ENCODE measurements at regions of chr14 and their contacts with region 1.

Region 1: GRCh38 chr14:100662879-100663760 is 63.6 kb upstream of the DLK1 start:
- DNase-seq: peak; percentile 77
- ATAC-seq: peak; percentile 23; the same call in 1 of the 3 replicates
- H3K4me3 ChIP-seq: peak overlapping the region in 2 of 3 experiments; percentile 1 to 19; a peak in 2 of 6 replicates
- H3K27ac ChIP-seq: no peak overlapping the region
- H3K4me1 ChIP-seq: peaks cover 89% of the 10 kb centered on the region
- H3K27me3 ChIP-seq: no peaks in the 10 kb centered on the region
- CTCF ChIP-seq: peak; percentile 80
- EP300 ChIP-seq: no peak
- POLR2A ChIP-seq: no peak
- RAD21 ChIP-seq: peak; percentile 56

Region 2: DNA sequence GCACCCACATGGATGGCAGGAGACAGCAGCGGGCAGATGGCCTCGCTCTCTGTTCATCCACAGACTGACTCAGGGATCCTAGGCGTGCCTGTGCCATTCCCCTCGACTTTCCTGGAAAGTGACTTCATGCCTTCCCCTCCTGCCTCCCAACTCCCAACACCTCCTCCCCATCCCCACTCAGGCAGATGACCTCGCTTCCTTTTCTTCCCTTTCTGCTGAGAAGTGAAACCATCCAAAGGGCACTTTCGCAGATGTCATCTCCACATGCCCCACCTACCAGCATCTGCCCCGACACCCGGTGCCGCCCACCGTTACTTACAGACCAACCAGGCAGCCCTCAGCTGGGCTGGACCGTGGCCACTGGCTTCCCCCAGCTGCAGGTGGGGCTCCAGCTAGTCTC is 105.5 kb before region 1 on chr14:
- CTCF ChIA-PET with region 1: no interaction called
- POLR2A ChIA-PET with region 1: no interaction called
- in situ Hi-C with region 1: no loop called
- intact Hi-C with region 1: no loop called
- DNase-seq: no peak
- ATAC-seq: no peak
- H3K4me3 ChIP-seq: no peak overlapping the region
- H3K27ac ChIP-seq: no peak overlapping the region
- H3K4me1 ChIP-seq: no peaks in the 10 kb centered on the region
- H3K27me3 ChIP-seq: peaks cover 25 to 95% of the 10 kb centered on the region in 2 experiments
- CTCF ChIP-seq: no peak
- EP300 ChIP-seq: no peak
- POLR2A ChIP-seq: no peak
- RAD21 ChIP-seq: no peak

Region 3: DNA sequence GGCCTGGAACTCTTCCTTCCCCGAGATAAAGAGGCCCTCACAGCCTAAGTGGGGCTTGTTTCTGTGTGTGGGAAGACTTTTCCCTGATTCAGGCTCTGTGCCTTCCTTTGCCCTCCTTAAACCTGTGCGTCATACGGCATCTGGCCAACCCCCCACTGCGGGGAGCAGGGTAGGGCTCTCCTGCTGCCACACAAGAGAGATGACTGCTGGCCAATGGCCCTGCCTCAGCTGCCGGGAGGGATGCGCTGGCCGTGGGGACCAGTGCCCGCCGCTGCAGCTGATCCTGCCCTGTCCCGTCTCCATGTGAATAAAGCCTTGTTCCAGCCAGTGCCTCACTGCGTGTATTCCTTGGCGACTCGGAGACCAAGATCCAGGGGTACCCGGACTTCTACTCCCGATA is 33.4 kb before region 1 on chr14:
- CTCF ChIA-PET with region 1: no interaction called
- POLR2A ChIA-PET with region 1: no interaction called
- in situ Hi-C with region 1: no loop called
- intact Hi-C with region 1: no loop called
- DNase-seq: no peak
- ATAC-seq: no peak
- H3K4me3 ChIP-seq: no peak overlapping the region
- H3K27ac ChIP-seq: no peak overlapping the region
- H3K4me1 ChIP-seq: no peaks in the 10 kb centered on the region
- H3K27me3 ChIP-seq: peaks cover 8 to 56% of the 10 kb centered on the region in 2 experiments; a peak in 4 of 5 replicates
- CTCF ChIP-seq: no peak
- EP300 ChIP-seq: no peak
- POLR2A ChIP-seq: no peak
- RAD21 ChIP-seq: no peak

Region 4: DNA sequence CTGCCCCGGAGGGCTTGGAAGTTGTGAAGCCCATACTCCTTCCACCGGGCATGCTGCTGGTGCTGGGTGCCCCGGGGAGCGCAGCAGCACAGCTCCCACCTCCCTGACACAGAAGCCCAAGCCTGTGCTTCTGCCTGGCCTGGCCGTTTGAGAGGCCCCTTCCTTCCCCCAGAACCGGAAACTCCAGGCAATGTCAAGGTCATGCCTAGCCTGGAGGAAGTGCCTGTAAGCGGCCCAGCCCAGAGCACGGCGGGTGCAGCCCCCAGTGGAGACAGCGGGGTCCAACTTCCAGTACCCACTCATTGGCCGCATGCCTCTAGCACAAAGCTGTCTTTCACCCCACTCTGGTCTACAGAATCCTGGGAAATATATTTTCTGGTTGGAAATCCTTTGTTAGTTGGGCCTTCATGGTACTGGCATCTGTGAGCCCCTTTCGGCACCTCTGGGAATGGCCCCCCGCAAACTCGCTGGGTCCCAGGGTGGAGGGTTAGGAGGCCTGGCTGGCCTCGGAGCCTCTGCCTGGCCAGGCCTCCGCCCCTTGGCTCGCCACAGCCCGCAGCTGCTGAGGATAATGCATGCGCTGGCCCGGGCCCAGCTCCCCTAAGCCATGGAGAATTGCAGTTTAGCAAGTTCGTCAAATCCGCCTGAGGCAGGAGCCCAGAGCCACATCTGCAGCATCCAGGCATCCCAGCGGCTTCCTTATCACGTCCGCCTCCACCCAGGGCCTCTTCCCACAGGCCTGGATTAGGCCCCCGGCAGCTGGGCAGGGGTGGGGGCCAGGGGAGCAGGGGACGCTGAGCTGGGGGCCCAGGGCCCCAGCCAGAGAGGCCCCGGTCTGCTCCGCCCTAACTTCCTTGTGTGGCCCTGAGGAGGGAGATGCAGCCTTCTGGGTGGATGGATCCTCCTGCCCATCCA is 14.7 kb after region 1 on chr14:
- CTCF ChIA-PET with region 1: interaction called, 3 read pairs
- POLR2A ChIA-PET with region 1: interaction called, 19 read pairs
- in situ Hi-C with region 1: no loop called
- intact Hi-C with region 1: loop called (anchors 1 kb)
- DNase-seq: peak; percentile 80
- ATAC-seq: peak; percentile 31
- H3K4me3 ChIP-seq: no peak overlapping the region; a peak in 1 of 6 replicates
- H3K27ac ChIP-seq: peak overlapping the region; percentile 69
- H3K4me1 ChIP-seq: peaks cover 87% of the 10 kb centered on the region
- H3K27me3 ChIP-seq: no peaks in the 10 kb centered on the region
- CTCF ChIP-seq: peak; percentile 41; the same call in 1 of the 2 replicates
- EP300 ChIP-seq: peak; percentile 53 to 78; a peak in 3 of 4 replicates
- POLR2A ChIP-seq: no peak
- RAD21 ChIP-seq: no peak

Region 5: GRCh38 chr14:100755649-100756048 is 92.5 kb after region 1 on chr14:
- CTCF ChIA-PET with region 1: no interaction called
- POLR2A ChIA-PET with region 1: interaction called, 12 read pairs
- in situ Hi-C with region 1: no loop called
- intact Hi-C with region 1: no loop called
- DNase-seq: no peak
- ATAC-seq: no peak
- H3K4me3 ChIP-seq: no peak overlapping the region
- H3K27ac ChIP-seq: no peak overlapping the region
- H3K4me1 ChIP-seq: peaks cover 59% of the 10 kb centered on the region
- H3K27me3 ChIP-seq: no peaks in the 10 kb centered on the region
- CTCF ChIP-seq: no peak
- EP300 ChIP-seq: no peak
- POLR2A ChIP-seq: no peak
- RAD21 ChIP-seq: no peak

Region 6: GRCh38 chr14:100850841-100851585 is 187.9 kb after region 1 on chr14:
- CTCF ChIA-PET with region 1: interaction called, 7 read pairs
- POLR2A ChIA-PET with region 1: no interaction called
- in situ Hi-C with region 1: no loop called
- intact Hi-C with region 1: loop called (anchors 5 kb)
- DNase-seq: peak; percentile 48
- ATAC-seq: peak; percentile 87
- H3K4me3 ChIP-seq: no peak overlapping the region
- H3K27ac ChIP-seq: no peak overlapping the region
- H3K4me1 ChIP-seq: peaks cover 49% of the 10 kb centered on the region
- H3K27me3 ChIP-seq: no peaks in the 10 kb centered on the region; a peak in 1 of 5 replicates
- CTCF ChIP-seq: peak; percentile 91
- EP300 ChIP-seq: no peak
- POLR2A ChIP-seq: no peak
- RAD21 ChIP-seq: peak; percentile 87

Region 7: DNA sequence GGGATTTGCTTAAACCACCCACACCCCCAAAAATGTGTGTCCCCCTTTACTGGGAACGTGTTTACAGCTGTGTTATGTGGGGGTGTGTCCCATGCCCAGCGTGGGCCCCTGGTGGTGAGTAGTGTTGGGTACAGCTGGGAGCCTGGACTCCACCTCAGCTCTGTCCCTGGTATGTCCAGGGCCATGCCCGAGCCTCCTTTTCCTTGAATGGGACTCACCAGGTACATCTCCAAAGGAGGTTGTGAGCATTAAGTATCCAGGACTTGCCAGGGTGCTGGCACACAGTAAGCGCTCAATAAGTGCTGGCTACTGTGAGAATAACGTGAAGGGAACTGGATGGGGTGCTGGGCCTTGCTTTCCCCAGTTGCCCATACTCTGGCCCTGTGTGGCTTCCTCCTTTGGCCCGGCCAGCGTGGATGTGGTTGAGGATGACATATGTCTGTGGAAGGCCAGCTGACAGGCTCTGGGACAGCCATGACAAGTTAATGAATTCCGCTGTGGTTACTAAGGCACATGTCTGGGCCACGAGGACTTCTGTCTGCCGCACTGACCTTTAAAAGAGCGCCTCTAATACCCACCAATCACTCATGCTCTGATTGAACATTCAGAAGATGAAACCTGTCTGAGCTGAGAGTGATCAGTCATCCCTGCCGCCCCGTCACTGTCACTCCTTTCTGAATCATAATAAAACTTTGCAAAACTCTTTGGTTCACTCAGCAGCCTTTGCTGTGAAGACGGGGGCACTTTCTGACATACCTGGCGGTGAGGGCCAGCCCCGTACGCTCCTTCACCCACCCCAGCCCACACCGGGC is 972.8 kb after region 1 on chr14:
- CTCF ChIA-PET with region 1: no interaction called
- POLR2A ChIA-PET with region 1: no interaction called
- in situ Hi-C with region 1: no loop called
- intact Hi-C with region 1: loop called (anchors 10 kb)
- DNase-seq: no peak
- ATAC-seq: peak; percentile 47; the same call in 1 of the 3 replicates
- H3K4me3 ChIP-seq: no peak overlapping the region
- H3K27ac ChIP-seq: no peak overlapping the region
- H3K4me1 ChIP-seq: no peaks in the 10 kb centered on the region
- H3K27me3 ChIP-seq: peaks cover 0 to 16% of the 10 kb centered on the region in 2 experiments; a peak in 3 of 5 replicates
- CTCF ChIP-seq: no peak
- EP300 ChIP-seq: no peak
- POLR2A ChIP-seq: no peak
- RAD21 ChIP-seq: no peak